ENCODE measurements at regions of chr4 and their contacts with region 1.

Region 1: GRCh38 chr4:109368661-109369060 is 65.0 kb upstream of the SEC24B start:
- DNase-seq: no peak

Region 2: DNA sequence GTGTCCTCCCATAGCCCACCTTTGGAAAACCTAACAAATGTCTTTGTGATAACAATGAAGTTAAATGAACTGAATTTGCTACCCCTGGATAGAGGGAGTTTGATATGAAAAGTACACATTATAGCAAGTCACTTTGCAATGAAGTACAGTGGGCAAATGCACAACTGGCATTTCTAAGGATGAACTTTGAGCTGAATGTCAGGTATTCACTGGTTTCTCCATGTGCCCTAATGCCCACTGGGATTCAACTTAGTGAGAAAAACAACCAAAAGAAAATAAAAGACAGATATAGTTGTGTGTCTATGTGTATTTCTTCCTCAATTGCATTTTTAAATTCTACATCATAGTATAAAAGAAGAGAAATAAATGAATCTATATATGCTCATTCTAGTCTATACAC is 1699.6 kb before region 1 on chr4:
- intact Hi-C with region 1: no loop called
- DNase-seq: no peak

Region 3: DNA sequence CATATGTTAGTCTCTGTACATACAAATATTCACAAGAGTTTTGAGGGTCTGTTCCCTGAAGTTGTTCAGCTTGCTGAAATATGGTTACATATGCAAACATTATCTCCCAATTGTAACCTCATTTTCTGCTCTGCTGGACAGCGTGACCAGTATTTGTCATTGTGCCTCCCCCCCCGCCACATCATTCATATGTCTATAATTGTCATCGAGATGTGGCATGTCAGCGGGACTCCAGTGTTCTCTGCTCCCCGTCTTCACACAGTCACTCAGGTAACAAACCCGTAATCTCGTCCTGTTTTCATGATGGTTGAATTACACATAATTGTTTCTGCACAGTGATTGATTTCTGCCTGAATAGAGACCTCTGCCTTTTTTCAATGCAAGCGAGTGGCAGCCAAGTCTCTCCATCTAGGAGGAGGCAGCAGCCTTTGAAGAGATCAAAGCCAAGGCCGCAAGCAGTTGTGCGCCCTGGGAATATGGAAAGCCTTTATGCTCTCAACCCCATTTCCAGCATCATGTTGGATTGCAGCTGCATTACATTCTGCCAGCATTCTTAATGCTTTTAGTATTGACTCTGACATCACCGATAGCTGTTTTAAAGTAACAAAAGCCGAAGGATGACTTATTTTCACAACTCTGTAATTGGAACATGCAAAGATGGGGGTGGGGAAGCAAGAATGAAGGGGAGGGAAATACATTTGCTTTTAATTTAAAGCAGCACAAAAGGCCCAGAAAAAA is 1227.3 kb before region 1 on chr4:
- intact Hi-C with region 1: loop called in 1 of 2 experiments (anchors 5 kb)
- DNase-seq: no peak

Region 4: GRCh38 chr4:109263721-109264120 is 104.9 kb before region 1 on chr4:
- intact Hi-C with region 1: no loop called
- DNase-seq: no peak

Measured in posterior vena cava (tissue), 2 donors.